ENCODE measurements at regions of chr6 and their contacts with region 1.

Region 1: GRCh38 chr6:90413867-90414266 is 117.2 kb upstream of the BACH2 start:
- DNase-seq: no peak
- ATAC-seq: peak; percentile 64
- H3K4me3 Mint-ChIP-seq: peak overlapping the region; percentile 70
- H3K27ac Mint-ChIP-seq: peak overlapping the region; percentile 84
- H3K4me1 Mint-ChIP-seq: peaks cover 32% of the 10 kb centered on the region
- H3K27me3 Mint-ChIP-seq: no peaks in the 10 kb centered on the region
- CTCF ChIP-seq: no peak

Region 2: GRCh38 chr6:90383196-90383822 is 30.6 kb before region 1 on chr6:
- CTCF ChIA-PET with region 1: no interaction called
- POLR2A ChIA-PET with region 1: no interaction called
- intact Hi-C with region 1: loop called (anchors 2 kb)
- DNase-seq: no peak
- ATAC-seq: peak; percentile 80
- H3K4me3 Mint-ChIP-seq: peak overlapping the region; percentile 61
- H3K27ac Mint-ChIP-seq: peak overlapping the region; percentile 75
- H3K4me1 Mint-ChIP-seq: peaks cover 80% of the 10 kb centered on the region
- H3K27me3 Mint-ChIP-seq: no peaks in the 10 kb centered on the region
- CTCF ChIP-seq: no peak

Region 3: DNA sequence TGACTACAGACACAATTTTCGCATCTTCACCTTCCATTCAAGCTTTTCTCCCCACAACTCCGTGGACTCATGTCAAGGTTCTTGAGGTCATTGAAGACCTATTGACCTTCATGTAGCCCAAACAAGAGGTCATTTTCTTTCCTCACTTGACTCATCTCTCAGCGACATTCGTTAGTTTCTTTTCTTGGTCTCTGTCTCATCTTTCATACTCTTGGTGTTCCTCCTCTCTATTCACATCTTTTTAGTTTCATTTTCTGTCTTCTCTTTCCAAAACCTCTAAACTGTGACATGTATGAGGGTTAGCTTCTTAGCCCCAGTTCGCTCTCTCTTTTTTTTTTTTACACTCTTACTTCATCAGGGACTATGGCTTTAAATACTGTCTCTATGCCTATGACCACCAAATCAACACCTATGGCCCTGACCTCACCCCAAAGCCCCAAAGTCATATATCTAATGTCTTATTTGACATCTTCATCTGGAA is 11.3 kb after region 1 on chr6:
- CTCF ChIA-PET with region 1: no interaction called
- POLR2A ChIA-PET with region 1: interaction called, 4 read pairs
- intact Hi-C with region 1: loop called (anchors 1 kb)
- DNase-seq: no peak
- ATAC-seq: peak; percentile 90
- H3K4me3 Mint-ChIP-seq: peak overlapping the region; percentile 71
- H3K27ac Mint-ChIP-seq: peak overlapping the region; percentile 62
- H3K4me1 Mint-ChIP-seq: peaks cover 19% of the 10 kb centered on the region
- H3K27me3 Mint-ChIP-seq: no peaks in the 10 kb centered on the region
- CTCF ChIP-seq: no peak